ENCODE measurements at regions of chr5 and their contacts with region 1.

Region 1: GRCh38 chr5:32217886-32218396 is 43.8 kb upstream of the GOLPH3 start:
- DNase-seq: no peak
- ATAC-seq: no peak
- H3K4me3 Mint-ChIP-seq: no peak overlapping the region
- H3K27ac Mint-ChIP-seq: no peak overlapping the region
- H3K4me1 Mint-ChIP-seq: no peaks in the 10 kb centered on the region
- H3K27me3 Mint-ChIP-seq: no peaks in the 10 kb centered on the region

Region 2: DNA sequence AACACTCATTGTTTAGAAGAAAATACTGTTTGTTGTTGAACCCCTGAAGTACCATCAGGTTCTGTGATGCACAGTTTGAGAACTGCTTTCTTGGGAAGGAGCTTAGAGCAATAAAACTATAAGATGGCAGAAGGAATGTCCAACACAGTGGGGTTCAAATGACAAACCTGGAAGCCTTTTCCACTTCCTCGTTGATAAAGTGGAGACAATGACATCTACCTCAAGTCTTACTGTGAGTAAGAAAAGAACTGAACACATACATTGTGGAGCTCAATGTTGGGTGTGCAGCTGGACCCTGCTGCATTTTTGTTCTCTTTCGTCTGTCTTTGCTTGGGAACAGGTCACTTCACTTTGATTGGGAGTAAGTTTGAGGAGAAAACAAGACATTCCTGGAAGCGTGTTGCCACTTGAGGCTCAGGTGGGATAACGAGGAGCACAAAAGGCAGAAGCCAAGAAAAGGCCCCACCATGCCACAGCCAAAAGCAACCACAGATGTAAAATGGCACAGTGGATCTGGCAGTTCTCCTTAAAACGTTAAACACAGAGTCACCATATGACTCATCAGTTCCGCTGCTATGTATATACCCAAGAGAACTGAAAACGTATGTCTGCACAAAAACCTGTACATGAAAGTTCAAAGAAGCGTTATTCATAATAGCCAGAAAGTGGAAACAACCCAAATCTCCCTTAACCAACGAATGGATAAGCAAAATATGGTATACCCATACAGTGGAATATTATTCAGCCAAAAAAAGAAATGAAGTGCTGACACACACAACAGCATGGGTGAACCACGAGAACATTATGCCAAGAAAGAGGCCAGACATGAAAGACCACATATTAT is 324.5 kb after region 1 on chr5:
- CTCF ChIA-PET with region 1: no interaction called
- POLR2A ChIA-PET with region 1: no interaction called
- intact Hi-C with region 1: loop called in 1 of 2 experiments (anchors 2 kb)
- DNase-seq: peak; percentile 61
- ATAC-seq: peak; percentile 82
- H3K4me3 Mint-ChIP-seq: peak overlapping the region; percentile 36
- H3K27ac Mint-ChIP-seq: peak overlapping the region; percentile 95
- H3K4me1 Mint-ChIP-seq: peaks cover 52% of the 10 kb centered on the region
- H3K27me3 Mint-ChIP-seq: no peaks in the 10 kb centered on the region